Activated B cell treated with CpG ODN at 0.5 μM for 24 hours (primary cell): ENCODE measurements at regions of chr3 and their contacts with region 1.

Region 1: DNA sequence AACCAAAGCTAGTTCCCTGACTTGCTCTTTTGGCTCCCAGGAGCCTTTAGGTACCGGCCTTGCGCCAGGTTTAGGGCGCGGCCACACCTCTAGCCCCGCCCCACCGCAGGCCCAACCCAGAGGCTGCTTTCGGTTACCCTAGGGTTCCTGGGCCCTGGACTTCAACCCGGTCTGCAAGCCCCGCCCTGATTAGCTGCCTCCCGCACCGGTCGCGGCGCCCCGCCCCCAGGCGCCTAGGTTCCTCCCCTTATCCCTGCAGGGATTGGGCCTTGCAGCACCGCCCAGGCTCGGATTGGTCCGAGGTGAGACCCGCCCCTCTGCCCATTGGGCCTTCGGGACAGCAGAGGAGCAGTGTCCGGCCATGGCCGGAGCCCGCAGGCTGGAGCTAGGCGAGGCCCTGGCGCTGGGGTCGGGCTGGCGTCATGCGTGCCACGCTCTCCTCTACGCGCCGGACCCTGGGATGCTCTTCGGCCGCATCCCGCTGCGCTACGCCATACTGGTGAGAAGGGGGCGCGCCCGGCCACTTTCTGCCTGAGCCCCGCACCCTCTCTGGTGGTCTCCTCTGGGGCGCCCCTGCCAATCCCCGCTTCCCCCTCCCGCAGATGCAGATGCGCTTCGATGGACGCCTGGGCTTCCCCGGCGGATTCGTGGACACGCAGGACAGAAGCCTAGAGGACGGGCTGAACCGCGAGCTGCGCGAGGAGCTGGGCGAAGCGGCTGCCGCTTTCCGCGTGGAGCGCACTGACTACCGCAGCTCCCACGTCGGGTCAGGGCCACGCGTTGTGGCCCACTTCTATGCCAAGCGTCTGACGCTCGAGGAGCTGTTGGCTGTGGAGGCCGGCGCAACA is at the start of gene NUDT16:
- DNase-seq: peak; percentile 98
- ATAC-seq: peak; percentile 98
- H3K4me3 Mint-ChIP-seq: peak within 1 kb of the TSS; percentile 97
- H3K27ac Mint-ChIP-seq: peak within 1 kb of the TSS; percentile 92
- H3K4me1 Mint-ChIP-seq: peaks cover 24% of the 10 kb centered on the region
- H3K27me3 Mint-ChIP-seq: no peaks in the 10 kb centered on the region
- CTCF ChIP-seq: no peak
- total RNA-seq, gene NUDT16: 15.8 TPM in 2 replicates

Region 2: GRCh38 chr3:130950641-130951040 is 431.0 kb before region 1 on chr3:
- CTCF ChIA-PET with region 1: no interaction called
- POLR2A ChIA-PET with region 1: no interaction called
- intact Hi-C with region 1: no loop called
- DNase-seq: no peak
- ATAC-seq: no peak
- H3K4me3 Mint-ChIP-seq: no peak overlapping the region
- H3K27ac Mint-ChIP-seq: no peak overlapping the region
- H3K4me1 Mint-ChIP-seq: no peaks in the 10 kb centered on the region
- H3K27me3 Mint-ChIP-seq: no peaks in the 10 kb centered on the region
- CTCF ChIP-seq: no peak

Region 3: DNA sequence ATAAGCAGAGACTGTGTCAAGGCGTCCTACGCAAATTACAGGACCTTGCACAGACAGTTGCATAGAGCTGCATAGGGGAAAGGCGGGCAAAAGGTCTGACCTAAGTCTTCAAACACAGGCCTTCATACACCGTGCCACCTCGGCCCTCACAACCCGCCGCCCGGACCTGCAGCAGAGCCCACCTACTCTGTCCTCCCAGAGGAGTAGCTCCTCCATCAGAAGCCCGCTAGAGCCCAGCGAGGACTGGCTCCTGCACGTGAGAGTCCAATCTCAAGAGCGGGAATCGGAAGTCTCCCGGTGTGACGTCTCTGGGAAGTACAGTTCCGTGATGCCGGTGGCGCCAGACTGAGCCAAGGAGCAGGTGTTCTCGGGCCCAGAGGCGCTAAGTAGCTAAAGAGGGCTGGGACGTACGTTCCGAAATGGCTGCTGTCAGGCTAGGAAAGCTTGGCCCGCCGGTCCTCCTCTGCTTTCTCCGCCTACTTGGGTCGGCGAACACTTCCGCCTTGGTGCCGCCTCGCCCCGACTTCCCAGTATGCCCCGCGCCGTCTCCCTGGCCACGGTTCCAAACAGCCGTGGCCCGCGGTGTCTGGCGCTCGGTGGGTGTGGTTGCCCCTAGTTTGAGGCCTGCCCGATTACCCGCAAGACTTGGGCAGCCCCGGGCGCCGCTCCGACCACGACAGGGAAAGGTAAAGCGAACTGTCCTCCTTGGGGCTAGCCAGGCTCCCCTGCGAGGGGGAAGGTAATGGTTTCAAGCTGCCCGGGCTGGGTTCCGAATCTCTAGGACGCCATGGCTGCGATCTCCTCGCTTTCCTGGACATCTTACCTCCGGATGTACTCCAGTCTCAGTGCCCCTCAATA is 355.1 kb before region 1 on chr3 and contains the starts of genes ASTE1 and NEK11:
- CTCF ChIA-PET with region 1: no interaction called
- POLR2A ChIA-PET with region 1: interaction called, 8 read pairs
- intact Hi-C with region 1: loop called (anchors 1 kb)
- DNase-seq: peak; percentile 89
- ATAC-seq: peak; percentile 97
- H3K4me3 Mint-ChIP-seq: peak within 1 kb of the TSS; percentile 96
- H3K27ac Mint-ChIP-seq: peak within 1 kb of the TSS; percentile 97
- H3K4me1 Mint-ChIP-seq: peaks cover 52% of the 10 kb centered on the region
- H3K27me3 Mint-ChIP-seq: no peaks in the 10 kb centered on the region
- CTCF ChIP-seq: no peak
- total RNA-seq, gene ASTE1: 15.6 and 16.9 TPM in 2 replicates
- total RNA-seq, gene NEK11: 1.5 and 1.9 TPM in 2 replicates

Region 4: GRCh38 chr3:131072845-131073244 is 308.8 kb before region 1 on chr3:
- CTCF ChIA-PET with region 1: no interaction called
- POLR2A ChIA-PET with region 1: no interaction called
- intact Hi-C with region 1: no loop called
- DNase-seq: no peak
- ATAC-seq: no peak
- H3K4me3 Mint-ChIP-seq: no peak overlapping the region
- H3K27ac Mint-ChIP-seq: no peak overlapping the region
- H3K4me1 Mint-ChIP-seq: no peaks in the 10 kb centered on the region
- H3K27me3 Mint-ChIP-seq: no peaks in the 10 kb centered on the region
- CTCF ChIP-seq: no peak

Region 5: GRCh38 chr3:131349946-131350347 is 31.7 kb before region 1 on chr3:
- CTCF ChIA-PET with region 1: no interaction called
- POLR2A ChIA-PET with region 1: no interaction called
- intact Hi-C with region 1: no loop called
- DNase-seq: no peak
- ATAC-seq: no peak
- H3K4me3 Mint-ChIP-seq: no peak overlapping the region
- H3K27ac Mint-ChIP-seq: no peak overlapping the region
- H3K4me1 Mint-ChIP-seq: peaks cover 13% of the 10 kb centered on the region
- H3K27me3 Mint-ChIP-seq: no peaks in the 10 kb centered on the region
- CTCF ChIP-seq: no peak

Region 6: GRCh38 chr3:131470377-131470776 is 88.7 kb after region 1 on chr3:
- CTCF ChIA-PET with region 1: no interaction called
- POLR2A ChIA-PET with region 1: interaction called, 4 read pairs
- intact Hi-C with region 1: loop called (anchors 5 kb)
- DNase-seq: no peak
- ATAC-seq: no peak
- H3K4me3 Mint-ChIP-seq: no peak overlapping the region
- H3K27ac Mint-ChIP-seq: no peak overlapping the region
- H3K4me1 Mint-ChIP-seq: peaks cover 10% of the 10 kb centered on the region
- H3K27me3 Mint-ChIP-seq: no peaks in the 10 kb centered on the region
- CTCF ChIP-seq: no peak

Region 7: GRCh38 chr3:131735116-131735515 is 353.4 kb after region 1 on chr3:
- CTCF ChIA-PET with region 1: no interaction called
- POLR2A ChIA-PET with region 1: no interaction called
- intact Hi-C with region 1: no loop called
- DNase-seq: no peak
- ATAC-seq: no peak
- H3K4me3 Mint-ChIP-seq: no peak overlapping the region
- H3K27ac Mint-ChIP-seq: no peak overlapping the region
- H3K4me1 Mint-ChIP-seq: no peaks in the 10 kb centered on the region
- H3K27me3 Mint-ChIP-seq: no peaks in the 10 kb centered on the region
- CTCF ChIP-seq: no peak